ENCODE measurements at regions of chr10 and their contacts with region 1.

Region 1: GRCh38 chr10:86197166-86197790 is 169.3 kb downstream of the GRID1 start:
- DNase-seq: peak; percentile 63

Region 2: DNA sequence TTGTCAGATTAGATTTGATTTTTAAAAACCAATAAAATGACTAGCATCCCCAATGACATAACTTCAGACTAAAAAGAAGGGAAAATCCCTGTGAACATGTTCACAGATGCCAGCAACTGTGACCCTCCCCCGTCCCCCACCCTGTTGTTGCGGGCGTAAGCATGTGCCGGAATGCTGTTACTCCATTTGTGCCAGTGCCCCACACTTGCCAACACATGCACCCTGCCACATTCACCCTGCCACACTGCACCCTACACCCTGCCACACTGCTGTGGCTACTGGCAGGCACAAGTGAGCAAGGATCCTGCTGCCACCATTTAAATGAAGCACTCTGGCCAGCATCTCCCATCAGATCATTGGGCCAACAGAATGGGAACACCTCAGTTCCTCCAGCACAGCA is 370.9 kb before region 1 on chr10:
- intact Hi-C with region 1: loop called in 1 of 2 experiments (anchors 10 kb)
- DNase-seq: no peak

Region 3: GRCh38 chr10:85950921-85951320 is 246.4 kb before region 1 on chr10:
- intact Hi-C with region 1: no loop called
- DNase-seq: no peak

Region 4: DNA sequence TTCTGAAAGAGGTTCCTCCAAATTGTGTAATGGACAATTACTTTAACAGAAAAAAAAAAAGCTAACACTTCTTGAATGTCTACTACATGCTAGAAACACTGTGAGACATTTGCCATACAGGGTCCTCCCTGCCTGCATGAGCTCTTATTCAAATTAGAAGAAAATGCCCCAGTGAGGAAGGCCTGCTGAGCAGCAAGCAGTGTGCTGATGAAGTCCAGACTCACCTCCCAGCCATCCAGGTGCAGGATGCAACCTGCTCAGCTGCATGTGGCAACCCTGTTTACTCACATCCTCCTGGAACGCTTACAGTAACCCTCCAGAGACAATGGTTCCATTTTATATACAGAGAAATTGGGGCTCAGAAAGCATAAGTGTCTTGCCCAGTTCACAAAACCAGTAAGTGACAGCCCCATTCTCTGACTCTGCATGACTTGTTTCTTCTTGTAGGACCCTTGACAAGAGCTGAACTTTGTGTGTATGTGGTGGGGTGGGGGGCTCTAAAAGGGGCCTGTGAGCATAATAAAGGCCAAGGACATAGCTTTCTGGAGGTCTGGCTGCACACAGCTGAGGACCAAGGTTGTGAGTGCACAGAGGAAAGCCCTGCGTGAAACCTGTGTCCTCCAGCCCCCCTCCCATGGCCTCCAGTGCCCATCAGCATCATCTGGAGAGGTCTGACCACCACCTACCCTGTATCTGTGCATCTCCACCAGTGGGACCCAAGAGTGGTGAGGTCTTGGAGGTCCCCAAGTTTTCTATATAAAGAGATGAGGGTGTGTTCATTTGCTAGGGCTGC is 218.5 kb before region 1 on chr10:
- intact Hi-C with region 1: no loop called
- DNase-seq: no peak